ENCODE measurements at regions of chr5 and their contacts with region 1.

Region 1: GRCh38 chr5:61023131-61023530 is 78.1 kb downstream of the NDUFAF2 start:
- DNase-seq: no peak
- H3K4me3 ChIP-seq: no peak overlapping the region
- H3K27ac ChIP-seq: no peak overlapping the region
- H3K4me1 ChIP-seq: no peaks in the 10 kb centered on the region
- CTCF ChIP-seq: no peak

Region 2: DNA sequence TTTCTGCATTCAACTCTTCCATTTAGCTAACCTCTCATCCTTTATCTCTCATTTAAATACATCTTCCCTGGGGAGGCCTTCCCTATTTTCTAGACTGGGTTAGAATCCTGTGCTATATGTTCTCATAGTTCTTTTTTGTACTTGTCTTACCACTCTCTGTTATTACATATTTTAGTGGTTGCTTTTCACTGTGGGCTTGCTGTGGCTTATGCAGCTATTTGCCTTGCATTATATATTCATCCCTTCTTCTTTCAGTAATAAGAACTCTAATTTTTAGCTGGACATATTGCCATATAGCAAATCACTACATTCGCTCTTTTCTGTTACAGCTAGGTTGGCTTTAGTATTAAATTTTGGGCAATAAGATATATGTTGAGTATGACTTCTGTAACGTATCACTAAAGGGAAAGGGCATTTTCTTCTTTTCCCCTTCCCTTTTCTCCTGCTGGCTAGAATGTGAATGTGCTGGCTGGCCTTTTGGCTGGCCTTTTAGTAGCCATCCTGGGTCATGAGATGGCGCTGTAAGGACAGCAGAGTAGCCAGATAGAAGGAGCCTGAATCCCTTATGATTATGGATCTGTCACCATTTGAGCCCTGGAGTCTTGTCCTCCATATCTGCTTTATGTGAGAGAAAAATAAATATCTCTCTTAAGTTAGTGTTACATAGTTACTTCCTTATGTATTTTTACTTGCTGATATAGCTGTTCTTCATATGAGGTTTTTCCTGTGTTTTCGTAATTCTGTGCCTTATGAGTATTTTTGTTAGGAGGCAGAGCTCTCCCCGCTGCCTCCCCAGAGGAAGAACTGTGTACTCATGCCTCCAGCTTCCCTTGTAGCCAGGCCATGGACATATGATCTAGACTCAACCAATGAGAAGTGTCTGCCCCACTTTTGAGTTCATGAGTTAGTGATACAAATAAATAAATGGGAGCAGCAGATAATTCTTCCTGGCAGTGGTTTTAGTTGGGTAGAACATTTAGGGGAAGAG is 12.4 kb before region 1 on chr5:
- CTCF ChIA-PET with region 1: no interaction called
- POLR2A ChIA-PET with region 1: interaction called, 11 read pairs
- intact Hi-C with region 1: no loop called
- DNase-seq: no peak
- H3K4me3 ChIP-seq: no peak overlapping the region
- H3K27ac ChIP-seq: no peak overlapping the region
- H3K4me1 ChIP-seq: no peaks in the 10 kb centered on the region
- CTCF ChIP-seq: no peak